ENCODE measurements at regions of chr21 and their contacts with region 1.

Region 1: DNA sequence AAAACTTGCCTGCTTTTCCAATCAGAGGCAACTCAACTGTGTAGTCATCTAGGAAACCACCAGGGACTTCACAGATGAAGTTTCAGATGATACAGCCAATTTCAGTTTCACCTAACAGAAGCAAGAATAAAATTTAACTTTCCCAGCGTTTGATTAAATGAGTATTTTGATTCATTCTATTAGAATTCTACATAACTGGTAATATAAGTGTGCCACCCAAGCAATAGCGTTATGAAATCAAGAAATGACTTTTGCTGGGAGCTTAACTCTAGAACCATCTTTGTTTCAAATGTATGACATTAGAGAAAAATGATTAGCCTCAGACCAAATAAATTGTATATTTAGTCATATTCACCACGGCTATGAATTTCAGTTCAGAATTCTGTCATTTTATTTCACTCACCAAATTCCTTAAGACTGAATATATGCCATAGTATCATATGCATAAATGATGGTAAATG is 239.3 kb downstream of the NRIP1 start:
- DNase-seq: no peak
- ATAC-seq: no peak
- H3K4me3 ChIP-seq: no peak overlapping the region
- H3K4me3 Mint-ChIP-seq: no peak overlapping the region
- H3K27ac ChIP-seq: no peak overlapping the region
- H3K27ac Mint-ChIP-seq: no peak overlapping the region
- H3K4me1 ChIP-seq: no peaks in the 10 kb centered on the region
- H3K4me1 Mint-ChIP-seq: no peaks in the 10 kb centered on the region
- H3K27me3 ChIP-seq: no peaks in the 10 kb centered on the region
- H3K27me3 Mint-ChIP-seq: no peaks in the 10 kb centered on the region
- CTCF ChIP-seq: no peak

Region 2: DNA sequence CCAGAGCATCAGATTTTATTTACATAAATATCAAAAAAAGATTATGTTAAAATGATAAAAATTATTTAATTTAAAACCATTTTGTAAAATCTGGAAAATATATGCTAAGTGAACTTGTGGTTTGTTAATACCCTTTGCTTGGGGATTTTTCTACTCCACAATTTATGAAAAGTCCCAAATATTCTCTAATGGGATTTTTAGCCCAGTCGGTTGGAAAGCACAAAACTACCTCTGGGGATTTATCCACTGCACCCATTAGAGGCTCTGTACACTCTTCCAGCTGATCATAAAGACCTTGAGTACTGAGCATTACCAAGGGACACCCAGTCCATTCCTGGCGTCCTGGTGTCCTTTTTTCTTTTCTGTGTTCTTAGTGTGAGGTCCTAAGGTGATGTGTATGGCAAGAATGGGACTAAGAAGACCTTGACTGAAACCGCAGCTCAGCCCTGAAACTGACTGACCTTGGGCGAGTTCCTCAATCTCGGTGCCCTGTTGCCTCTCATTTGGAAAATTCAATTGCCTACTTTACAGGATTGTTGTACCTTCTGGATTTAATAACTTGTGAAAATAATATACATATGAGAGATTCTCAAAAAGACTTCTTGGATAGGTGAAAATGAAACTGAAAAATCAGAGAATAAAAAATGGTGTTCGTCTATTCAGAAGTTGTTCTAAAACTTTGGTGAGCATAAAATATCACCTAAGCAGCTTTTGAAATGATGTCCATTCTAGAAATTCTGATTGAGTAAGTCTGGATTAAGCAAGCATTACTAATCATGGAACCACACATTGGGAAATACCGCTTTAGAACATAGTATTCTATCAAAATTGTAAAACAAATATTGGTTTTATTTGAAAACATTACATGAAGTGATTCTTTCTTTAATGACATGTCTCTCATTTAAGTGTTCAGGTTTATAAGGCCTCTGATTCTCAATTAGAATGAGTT is 257.9 kb before region 1 on chr21:
- CTCF ChIA-PET with region 1: no interaction called
- POLR2A ChIA-PET with region 1: no interaction called
- intact Hi-C with region 1: loop called in 1 of 2 experiments (anchors 5 kb)
- DNase-seq: no peak
- ATAC-seq: no peak
- H3K4me3 ChIP-seq: no peak overlapping the region
- H3K4me3 Mint-ChIP-seq: no peak overlapping the region
- H3K27ac ChIP-seq: no peak overlapping the region
- H3K27ac Mint-ChIP-seq: no peak overlapping the region
- H3K4me1 ChIP-seq: no peaks in the 10 kb centered on the region
- H3K4me1 Mint-ChIP-seq: no peaks in the 10 kb centered on the region
- H3K27me3 ChIP-seq: no peaks in the 10 kb centered on the region
- H3K27me3 Mint-ChIP-seq: no peaks in the 10 kb centered on the region
- CTCF ChIP-seq: no peak

Measured in CD8-positive, alpha-beta T cell (primary cell).